ENCODE measurements at regions of chr4 and their contacts with region 1.

Region 1: GRCh38 chr4:15805583-15806517 is 27.7 kb downstream of the CD38 start:
- DNase-seq: peak; percentile 80
- H3K4me3 Mint-ChIP-seq: no peak overlapping the region
- H3K27ac Mint-ChIP-seq: no peak overlapping the region
- H3K4me1 Mint-ChIP-seq: peaks cover 5% of the 10 kb centered on the region
- H3K27me3 Mint-ChIP-seq: peaks cover 43% of the 10 kb centered on the region
- CTCF ChIP-seq: peak; percentile 67

Region 2: GRCh38 chr4:15729910-15730533 is 75.8 kb before region 1 on chr4:
- CTCF ChIA-PET with region 1: interaction called, 8 read pairs
- POLR2A ChIA-PET with region 1: no interaction called
- intact Hi-C with region 1: loop called (anchors 5 kb)
- DNase-seq: peak; percentile 67
- H3K4me3 Mint-ChIP-seq: no peak overlapping the region
- H3K27ac Mint-ChIP-seq: no peak overlapping the region
- H3K4me1 Mint-ChIP-seq: no peaks in the 10 kb centered on the region
- H3K27me3 Mint-ChIP-seq: peaks cover 17% of the 10 kb centered on the region
- CTCF ChIP-seq: peak; percentile 65

Region 3: GRCh38 chr4:15938182-15938581 is 132.3 kb after region 1 on chr4:
- CTCF ChIA-PET with region 1: interaction called, 11 read pairs
- POLR2A ChIA-PET with region 1: no interaction called
- intact Hi-C with region 1: no loop called
- DNase-seq: peak; percentile 80
- H3K4me3 Mint-ChIP-seq: peak overlapping the region; percentile 58
- H3K27ac Mint-ChIP-seq: no peak overlapping the region
- H3K4me1 Mint-ChIP-seq: peaks cover 30% of the 10 kb centered on the region
- H3K27me3 Mint-ChIP-seq: no peaks in the 10 kb centered on the region
- CTCF ChIP-seq: no peak

Region 4: DNA sequence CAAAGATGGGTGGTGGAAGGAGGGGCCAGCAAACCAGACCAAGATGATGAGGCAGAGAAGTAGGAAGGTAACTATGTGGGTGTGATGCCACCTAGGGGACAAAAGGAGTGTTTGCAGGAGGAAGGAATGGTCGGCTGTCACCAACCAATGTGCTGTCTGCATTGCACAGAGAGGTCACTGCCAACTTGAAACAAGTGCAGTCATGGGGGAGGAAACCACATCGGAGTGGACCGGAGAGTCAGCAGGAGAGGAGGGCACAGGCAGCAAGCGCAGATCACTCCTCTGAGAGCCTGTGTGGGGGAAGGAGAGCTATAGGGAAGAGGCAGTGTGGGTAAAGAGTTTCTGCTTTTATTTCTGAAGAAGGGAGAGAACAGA is 195.6 kb after region 1 on chr4:
- CTCF ChIA-PET with region 1: interaction called, 112 read pairs
- POLR2A ChIA-PET with region 1: interaction called, 5 read pairs
- intact Hi-C with region 1: loop called (anchors 1 kb)
- DNase-seq: peak; percentile 75
- H3K4me3 Mint-ChIP-seq: no peak overlapping the region
- H3K27ac Mint-ChIP-seq: no peak overlapping the region
- H3K4me1 Mint-ChIP-seq: no peaks in the 10 kb centered on the region
- H3K27me3 Mint-ChIP-seq: no peaks in the 10 kb centered on the region
- CTCF ChIP-seq: peak; percentile 94

Region 5: DNA sequence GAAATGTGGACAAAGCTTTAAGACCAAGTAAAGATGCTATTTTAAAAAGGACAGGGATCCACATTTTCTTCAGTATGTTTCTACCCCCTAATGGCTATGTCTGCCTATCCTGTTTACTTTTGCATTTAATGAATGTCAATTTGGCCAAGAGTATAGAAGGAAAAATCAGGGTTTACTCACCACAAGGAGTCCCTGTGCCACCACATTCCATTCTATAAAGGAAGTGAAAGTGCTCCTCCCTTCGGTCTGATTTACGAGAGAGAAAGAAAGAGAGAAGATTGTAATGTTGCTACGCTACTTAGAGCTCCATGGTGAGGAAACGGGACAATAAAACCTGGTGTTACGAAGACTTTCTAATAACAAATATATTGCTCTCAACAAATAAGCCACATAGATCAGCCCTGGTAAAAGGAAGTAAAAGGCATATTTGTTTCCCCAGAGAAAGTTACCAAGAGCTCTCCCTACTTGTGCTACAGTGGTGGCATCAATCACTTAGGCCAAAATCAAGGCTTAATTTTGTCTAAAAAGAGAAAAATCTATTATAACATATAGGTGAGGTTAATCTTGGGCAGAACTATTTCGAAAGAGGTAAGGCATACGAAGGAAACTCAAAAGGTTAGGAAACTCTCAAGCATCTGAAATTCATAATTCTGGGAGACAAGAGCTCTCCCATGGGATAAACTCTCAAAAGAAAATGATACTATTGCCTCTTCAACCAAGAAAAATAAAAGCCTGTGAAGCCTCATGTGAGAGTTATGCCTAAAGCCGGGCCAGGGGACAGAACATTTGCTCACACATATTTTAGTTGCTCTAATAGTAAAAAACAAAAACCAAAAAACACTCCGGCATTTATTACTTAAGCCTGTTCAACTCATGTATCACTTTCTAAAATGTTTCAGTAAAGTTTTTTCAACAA is 390.9 kb after region 1 on chr4:
- CTCF ChIA-PET with region 1: interaction called, 9 read pairs
- POLR2A ChIA-PET with region 1: no interaction called
- intact Hi-C with region 1: loop called (anchors 5 kb)
- DNase-seq: peak; percentile 62
- H3K4me3 Mint-ChIP-seq: peak overlapping the region; percentile 56
- H3K27ac Mint-ChIP-seq: peak overlapping the region; percentile 44
- H3K4me1 Mint-ChIP-seq: no peaks in the 10 kb centered on the region
- H3K27me3 Mint-ChIP-seq: no peaks in the 10 kb centered on the region
- CTCF ChIP-seq: peak; percentile 19

Measured in MCF 10A (cell line).